K562 (cell line): ENCODE measurements at regions of chr18 and their contacts with region 1.

Region 1: GRCh38 chr18:27331606-27332005 is 146.5 kb upstream of the CHST9 start:
- DNase-seq: no peak
- ATAC-seq: no peak
- H3K4me3 ChIP-seq: no peak overlapping the region
- H3K27ac ChIP-seq: no peak overlapping the region
- H3K4me1 ChIP-seq: no peaks in the 10 kb centered on the region
- H3K27me3 ChIP-seq: no peaks in the 10 kb centered on the region
- CTCF ChIP-seq: no peak
- EP300 ChIP-seq: no peak
- POLR2A ChIP-seq: no peak
- RAD21 ChIP-seq: no peak

Region 2: GRCh38 chr18:27314996-27315395 is 16.6 kb before region 1 on chr18:
- CTCF ChIA-PET with region 1: no interaction called
- POLR2A ChIA-PET with region 1: no interaction called
- in situ Hi-C with region 1: no loop called
- intact Hi-C with region 1: no loop called
- DNase-seq: no peak
- ATAC-seq: no peak
- H3K4me3 ChIP-seq: no peak overlapping the region
- H3K27ac ChIP-seq: no peak overlapping the region
- H3K4me1 ChIP-seq: no peaks in the 10 kb centered on the region
- H3K27me3 ChIP-seq: no peaks in the 10 kb centered on the region
- CTCF ChIP-seq: no peak
- EP300 ChIP-seq: no peak
- POLR2A ChIP-seq: no peak
- RAD21 ChIP-seq: no peak

Region 3: GRCh38 chr18:27413495-27414401 is 82.1 kb after region 1 on chr18:
- CTCF ChIA-PET with region 1: no interaction called
- POLR2A ChIA-PET with region 1: no interaction called
- in situ Hi-C with region 1: no loop called
- intact Hi-C with region 1: loop called (anchors 10 kb)
- DNase-seq: no peak
- ATAC-seq: no peak
- H3K4me3 ChIP-seq: no peak overlapping the region
- H3K27ac ChIP-seq: no peak overlapping the region
- H3K4me1 ChIP-seq: no peaks in the 10 kb centered on the region
- H3K27me3 ChIP-seq: no peaks in the 10 kb centered on the region
- CTCF ChIP-seq: no peak
- EP300 ChIP-seq: no peak
- POLR2A ChIP-seq: no peak
- RAD21 ChIP-seq: no peak

Region 4: DNA sequence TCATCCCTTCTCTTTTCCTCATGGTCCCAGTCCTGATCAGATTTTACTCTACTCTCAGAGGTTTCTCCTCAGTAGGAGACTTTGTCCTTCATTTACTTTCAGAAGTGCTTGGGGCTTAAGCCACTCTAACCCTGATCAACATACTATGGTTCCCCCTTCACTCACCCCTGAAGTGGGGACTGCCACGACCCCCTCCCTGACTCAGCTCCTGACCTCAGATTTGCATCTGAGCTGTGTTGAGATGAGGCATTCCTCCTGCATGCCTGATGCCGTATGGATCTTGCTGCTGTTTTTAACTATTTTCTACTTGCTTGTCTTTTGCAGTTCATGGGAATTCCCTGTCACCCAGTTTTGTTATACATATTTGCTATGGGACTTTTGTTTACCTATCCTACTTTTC is 160.2 kb after region 1 on chr18:
- CTCF ChIA-PET with region 1: no interaction called
- POLR2A ChIA-PET with region 1: no interaction called
- in situ Hi-C with region 1: no loop called
- intact Hi-C with region 1: no loop called
- DNase-seq: no peak
- ATAC-seq: no peak
- H3K4me3 ChIP-seq: no peak overlapping the region
- H3K27ac ChIP-seq: no peak overlapping the region
- H3K4me1 ChIP-seq: no peaks in the 10 kb centered on the region
- H3K27me3 ChIP-seq: no peaks in the 10 kb centered on the region
- CTCF ChIP-seq: no peak
- EP300 ChIP-seq: no peak
- POLR2A ChIP-seq: no peak
- RAD21 ChIP-seq: no peak